Left cardiac atrium (tissue), 4 donors: ENCODE measurements at regions of chr2 and their contacts with region 1.

Region 1: GRCh38 chr2:95076784-95077529 is 44.7 kb downstream of the MRPS5 start:
- DNase-seq: peak; percentile 72
- ATAC-seq: peak; percentile 72 to 85

Region 2: DNA sequence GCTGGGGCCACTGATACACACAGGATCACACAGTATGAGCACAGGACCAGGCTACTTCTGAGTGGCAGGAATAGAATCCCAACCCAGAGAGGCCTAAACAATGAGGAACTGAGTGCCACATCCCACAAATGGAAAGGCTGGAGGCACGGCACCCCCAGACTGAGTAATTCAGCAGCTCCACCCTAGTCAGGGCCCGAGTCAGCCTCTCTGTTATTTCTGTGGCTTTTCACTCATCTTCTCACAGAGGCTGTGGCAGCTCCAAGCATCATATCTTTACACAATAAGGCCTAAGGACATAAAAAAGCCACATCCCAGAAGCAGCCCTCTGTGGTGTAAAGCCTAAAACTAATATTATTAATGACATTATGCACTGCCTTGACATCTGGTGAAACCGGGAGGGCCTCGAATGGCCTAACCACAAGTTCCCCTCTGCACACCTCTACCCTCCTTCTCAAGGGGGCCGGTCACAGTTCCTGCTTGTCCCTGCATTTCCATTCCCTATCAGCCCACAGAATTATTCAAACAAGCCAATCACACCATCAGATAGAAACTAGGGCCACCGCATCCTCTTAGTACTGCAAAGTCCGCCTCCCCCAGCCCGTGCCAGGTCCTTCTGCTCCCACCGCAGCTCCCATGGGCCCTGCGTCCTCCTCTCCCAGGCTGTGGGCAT is 63.9 kb before region 1 on chr2:
- intact Hi-C with region 1: loop called in 1 of 2 experiments (anchors 10 kb)
- DNase-seq: no peak
- ATAC-seq: no peak